ENCODE measurements at regions of chr10 and their contacts with region 1.

Region 1: GRCh38 chr10:124688889-124689670 is 55.1 kb downstream of the FAM53B start:
- DNase-seq: peak; percentile 92
- ATAC-seq: peak; percentile 95
- H3K4me3 Mint-ChIP-seq: peak overlapping the region; percentile 52
- H3K27ac Mint-ChIP-seq: peak overlapping the region; percentile 94
- H3K4me1 Mint-ChIP-seq: peaks cover 88% of the 10 kb centered on the region
- H3K27me3 Mint-ChIP-seq: no peaks in the 10 kb centered on the region

Region 2: DNA sequence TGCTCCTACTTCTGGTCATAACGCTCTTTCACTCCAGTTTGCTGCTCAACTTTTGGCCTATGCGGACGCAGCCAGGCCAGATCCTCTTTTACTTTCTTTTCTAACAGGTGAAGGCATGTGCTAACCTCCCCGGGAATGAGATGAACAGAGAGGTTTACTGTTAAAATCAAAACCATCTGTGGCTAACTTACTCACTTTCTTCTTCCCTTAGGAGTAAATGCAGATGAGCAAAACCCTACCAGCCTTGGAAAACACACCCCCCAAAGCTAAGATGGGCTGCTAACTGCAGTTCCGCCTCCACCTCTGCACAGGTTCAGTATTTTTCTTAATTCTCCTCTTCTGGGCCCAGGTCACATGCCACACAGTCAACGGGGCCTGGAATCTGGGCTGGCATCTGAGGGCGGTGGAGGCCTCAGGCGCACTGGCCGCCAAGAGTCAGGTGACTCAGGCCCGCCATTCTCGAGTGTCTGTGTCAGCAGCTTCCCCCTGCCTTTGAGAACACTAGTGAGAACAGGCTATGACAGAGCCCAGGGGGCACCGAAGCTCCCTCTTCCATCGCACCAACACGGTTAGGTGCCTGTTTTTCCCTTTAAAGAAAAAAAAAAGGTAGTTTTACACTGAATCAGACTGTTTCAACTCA is 44.0 kb after region 1 on chr10:
- CTCF ChIA-PET with region 1: interaction called, 15 read pairs
- DNase-seq: peak; percentile 80
- ATAC-seq: peak; percentile 76
- H3K4me3 Mint-ChIP-seq: peak overlapping the region; percentile 67
- H3K27ac Mint-ChIP-seq: peak overlapping the region; percentile 89
- H3K4me1 Mint-ChIP-seq: peaks cover 97% of the 10 kb centered on the region
- H3K27me3 Mint-ChIP-seq: no peaks in the 10 kb centered on the region